Endothelial cell of umbilical vein (primary cell): ENCODE measurements at regions of chr5 and their contacts with region 1.

Region 1: DNA sequence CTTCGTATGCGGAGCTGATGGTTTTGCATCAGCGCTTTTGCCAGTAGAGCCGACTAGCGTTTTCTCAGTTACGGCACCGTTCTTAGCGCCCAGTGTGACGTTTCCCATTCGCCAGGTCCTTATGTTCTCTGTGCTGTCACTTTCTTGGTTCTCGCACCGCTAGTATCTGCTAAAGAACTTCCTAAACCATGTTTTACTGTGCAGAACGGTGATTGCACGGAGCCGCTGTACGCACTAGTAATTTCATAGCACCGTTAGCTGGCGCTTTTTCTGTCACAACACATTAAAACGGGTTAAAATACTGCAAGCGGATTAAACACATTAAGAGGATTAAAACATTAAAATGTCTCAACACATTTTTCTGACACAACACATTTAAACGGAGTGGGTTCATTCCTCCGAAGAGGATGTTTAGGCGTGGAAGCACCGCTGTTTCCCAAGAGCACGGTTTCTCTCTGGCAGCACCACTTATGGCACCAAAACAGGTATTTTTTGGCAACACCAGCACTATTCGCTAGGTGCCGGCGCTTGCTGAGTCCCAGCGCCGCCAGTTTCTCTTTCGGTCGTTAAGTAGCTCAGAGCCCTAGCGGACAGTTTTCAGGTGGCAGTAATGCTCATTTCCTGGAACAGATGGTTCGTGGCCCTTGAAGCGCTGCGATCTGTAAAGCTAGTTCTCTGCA is 20.4 kb downstream of the ANXA2R start:
- DNase-seq: peak; percentile 87
- H3K4me3 ChIP-seq: peak overlapping the region; percentile 36 to 83 (median 65)
- H3K27ac ChIP-seq: peak overlapping the region; percentile 93
- H3K4me1 ChIP-seq: peaks cover 19% of the 10 kb centered on the region
- H3K27me3 ChIP-seq: no peaks in the 10 kb centered on the region
- CTCF ChIP-seq: peak; percentile 51 to 61
- POLR2A ChIP-seq: no peak

Region 2: GRCh38 chr5:42994246-42995151 is 25.3 kb before region 1 on chr5:
- CTCF ChIA-PET with region 1: interaction called, 77 read pairs
- POLR2A ChIA-PET with region 1: interaction called, 10 read pairs
- dilution Hi-C with region 1: no loop called
- intact Hi-C with region 1: loop called (anchors 1 kb)
- DNase-seq: peak; percentile 96
- H3K4me3 ChIP-seq: peak overlapping the region; percentile 59 to 94 (median 61)
- H3K27ac ChIP-seq: peak overlapping the region; percentile 98
- H3K4me1 ChIP-seq: peaks cover 30% of the 10 kb centered on the region
- H3K27me3 ChIP-seq: no peaks in the 10 kb centered on the region
- CTCF ChIP-seq: peak; percentile 85 to 86
- POLR2A ChIP-seq: peak; percentile 52

Region 3: DNA sequence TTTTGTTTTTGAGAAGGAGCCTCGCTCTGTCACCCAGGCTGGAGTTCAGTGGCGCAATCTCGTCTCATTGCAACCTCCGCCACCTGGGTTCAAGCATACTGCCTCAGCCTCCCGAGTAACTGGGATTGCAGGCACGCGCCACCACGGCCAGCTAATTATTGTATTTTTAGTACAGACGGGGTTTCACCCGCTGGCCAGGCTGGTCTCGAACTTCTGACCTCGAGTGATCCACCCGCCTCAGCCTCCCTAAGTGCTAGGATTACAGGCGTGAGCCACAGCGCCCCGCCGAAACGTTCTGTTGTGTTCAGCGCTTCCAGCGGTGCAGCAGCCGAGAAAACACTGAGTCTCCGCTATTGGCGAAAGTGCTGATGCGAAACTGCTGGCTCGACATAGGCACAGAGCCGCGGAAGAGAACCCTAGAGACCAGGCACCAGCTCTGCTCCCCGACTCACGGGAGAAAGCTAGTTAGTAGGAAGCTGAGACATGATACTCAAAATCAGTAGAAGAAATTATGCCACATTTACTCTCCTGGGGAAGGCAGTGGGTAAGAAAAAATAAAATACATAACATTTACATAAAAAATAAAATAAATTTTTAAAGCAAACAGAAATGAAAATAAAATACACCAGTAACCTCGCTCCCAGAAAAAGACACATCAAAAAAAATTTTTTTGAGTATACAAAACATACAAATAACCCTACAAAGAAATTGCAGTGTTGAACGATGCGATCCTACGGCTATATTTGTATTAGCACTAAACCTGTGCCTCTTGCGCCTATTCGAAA is 11.2 kb before region 1 on chr5:
- CTCF ChIA-PET with region 1: interaction called, 62 read pairs
- POLR2A ChIA-PET with region 1: interaction called, 8 read pairs
- dilution Hi-C with region 1: no loop called
- intact Hi-C with region 1: loop called (anchors 1 kb)
- DNase-seq: peak; percentile 96
- H3K4me3 ChIP-seq: peak overlapping the region; percentile 45 to 77 (median 75)
- H3K27ac ChIP-seq: peak overlapping the region; percentile 90
- H3K4me1 ChIP-seq: peaks cover 26% of the 10 kb centered on the region
- H3K27me3 ChIP-seq: no peaks in the 10 kb centered on the region
- CTCF ChIP-seq: peak in 1 of 2 donors; percentile 28
- POLR2A ChIP-seq: peak; percentile 66

Region 4: GRCh38 chr5:43034591-43034968 is 14.8 kb after region 1 on chr5:
- CTCF ChIA-PET with region 1: interaction called, 69 read pairs
- POLR2A ChIA-PET with region 1: interaction called, 6 read pairs
- dilution Hi-C with region 1: no loop called
- intact Hi-C with region 1: loop called (anchors 1 kb)
- DNase-seq: peak; percentile 84
- H3K4me3 ChIP-seq: peak overlapping the region in 1 of 3 experiments; percentile 10
- H3K27ac ChIP-seq: peak overlapping the region; percentile 67
- H3K4me1 ChIP-seq: peaks cover 33% of the 10 kb centered on the region
- H3K27me3 ChIP-seq: no peaks in the 10 kb centered on the region
- CTCF ChIP-seq: no peak
- POLR2A ChIP-seq: peak; percentile 39

Region 5: GRCh38 chr5:43040287-43041098 is 20.7 kb after region 1 on chr5 and contains the start of gene ANXA2R:
- CTCF ChIA-PET with region 1: interaction called, 69 read pairs
- POLR2A ChIA-PET with region 1: interaction called, 9 read pairs
- dilution Hi-C with region 1: no loop called
- intact Hi-C with region 1: loop called (anchors 1 kb)
- DNase-seq: peak; percentile 97
- H3K4me3 ChIP-seq: peak within 1 kb of the TSS; percentile 51 to 87 (median 54)
- H3K27ac ChIP-seq: peak within 1 kb of the TSS; percentile 77
- H3K4me1 ChIP-seq: peaks cover 30% of the 10 kb centered on the region
- H3K27me3 ChIP-seq: no peaks in the 10 kb centered on the region
- CTCF ChIP-seq: peak; percentile 81 to 86
- POLR2A ChIP-seq: no peak
- total RNA-seq, gene ANXA2R: 6.6 and 8.1 TPM in 2 replicates

Region 6: DNA sequence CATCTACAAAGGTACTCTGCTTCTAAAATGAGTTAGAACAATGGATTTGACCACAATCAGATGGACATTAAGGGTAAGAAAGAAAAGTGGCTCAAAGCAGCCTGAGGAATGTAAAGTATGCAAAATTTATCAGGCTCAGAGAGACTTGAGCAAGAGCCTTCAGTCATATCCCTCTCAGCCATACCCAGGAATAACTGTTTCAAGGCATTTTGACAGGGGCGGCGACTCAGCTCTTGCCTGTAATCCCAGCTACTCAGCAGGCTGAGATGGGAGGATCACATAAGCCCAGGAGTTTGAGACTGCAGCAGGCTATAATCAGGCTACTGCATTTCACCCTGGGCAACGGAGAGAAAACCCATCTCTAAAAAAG is 59.2 kb after region 1 on chr5:
- CTCF ChIA-PET with region 1: no interaction called
- POLR2A ChIA-PET with region 1: no interaction called
- dilution Hi-C with region 1: no loop called
- intact Hi-C with region 1: no loop called
- DNase-seq: no peak
- H3K4me3 ChIP-seq: no peak overlapping the region
- H3K27ac ChIP-seq: no peak overlapping the region
- H3K4me1 ChIP-seq: peaks cover 8% of the 10 kb centered on the region
- H3K27me3 ChIP-seq: no peaks in the 10 kb centered on the region
- CTCF ChIP-seq: no peak
- POLR2A ChIP-seq: no peak